ENCODE measurements at regions of chr6 and their contacts with region 1.

Region 1: GRCh38 chr6:73520688-73521350 is at the start of gene EEF1A1:
- DNase-seq: peak; percentile 99
- H3K4me3 Mint-ChIP-seq: peak within 1 kb of the TSS; percentile 92
- H3K27ac Mint-ChIP-seq: peak within 1 kb of the TSS; percentile 99
- H3K4me1 Mint-ChIP-seq: peaks cover 13% of the 10 kb centered on the region
- H3K27me3 Mint-ChIP-seq: peaks cover 21% of the 10 kb centered on the region
- CTCF ChIP-seq: no peak
- total RNA-seq, gene EEF1A1: 5,799 and 7,052 TPM in 2 replicates

Region 2: GRCh38 chr6:73566954-73567591 is 46.3 kb after region 1 on chr6:
- CTCF ChIA-PET with region 1: interaction called, 4 read pairs
- intact Hi-C with region 1: loop called (anchors 5 kb)
- DNase-seq: peak; percentile 86
- H3K4me3 Mint-ChIP-seq: peak overlapping the region; percentile 15
- H3K27ac Mint-ChIP-seq: peak overlapping the region; percentile 79
- H3K4me1 Mint-ChIP-seq: peaks cover 23% of the 10 kb centered on the region
- H3K27me3 Mint-ChIP-seq: no peaks in the 10 kb centered on the region
- CTCF ChIP-seq: no peak

Region 3: GRCh38 chr6:73580247-73581149 is 59.7 kb after region 1 on chr6:
- CTCF ChIA-PET with region 1: interaction called, 15 read pairs
- intact Hi-C with region 1: loop called (anchors 1 kb)
- DNase-seq: peak; percentile 94
- H3K4me3 Mint-ChIP-seq: peak overlapping the region; percentile 67
- H3K27ac Mint-ChIP-seq: peak overlapping the region; percentile 98
- H3K4me1 Mint-ChIP-seq: peaks cover 20% of the 10 kb centered on the region
- H3K27me3 Mint-ChIP-seq: no peaks in the 10 kb centered on the region
- CTCF ChIP-seq: peak; percentile 16

Measured in Calu3 (cell line).